ENCODE measurements at regions of chr2 and their contacts with region 1.

Region 1: DNA sequence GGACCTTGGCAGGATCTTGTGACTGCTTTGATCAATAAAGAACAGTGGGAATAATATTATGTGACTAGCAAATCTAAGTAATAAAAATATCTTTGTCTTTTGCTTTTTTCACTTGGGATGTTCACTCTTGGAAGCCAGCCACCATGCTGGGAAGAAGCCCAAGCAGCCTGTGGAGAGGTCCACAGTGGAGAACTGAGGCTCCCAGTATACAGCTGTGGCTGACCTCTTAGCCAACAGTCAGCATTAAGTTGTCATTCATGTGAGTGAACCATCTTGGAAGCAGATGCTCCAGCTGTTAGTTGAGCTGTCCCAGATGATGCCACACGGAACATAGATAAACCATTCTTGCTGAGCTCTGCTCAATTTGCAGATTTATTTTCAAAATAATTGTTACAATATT is 160.0 kb downstream of the OSR1 start:
- DNase-seq: no peak
- H3K4me3 ChIP-seq: no peak overlapping the region
- H3K27ac ChIP-seq: no peak overlapping the region
- H3K4me1 ChIP-seq: no peaks in the 10 kb centered on the region
- CTCF ChIP-seq: no peak

Region 2: GRCh38 chr2:18849841-18850578 is 348.4 kb before region 1 on chr2:
- CTCF ChIA-PET with region 1: no interaction called
- POLR2A ChIA-PET with region 1: no interaction called
- intact Hi-C with region 1: no loop called
- DNase-seq: no peak
- H3K4me3 ChIP-seq: no peak overlapping the region
- H3K27ac ChIP-seq: no peak overlapping the region
- H3K4me1 ChIP-seq: no peaks in the 10 kb centered on the region
- CTCF ChIP-seq: no peak

Region 3: GRCh38 chr2:18991177-18992168 is 206.9 kb before region 1 on chr2:
- CTCF ChIA-PET with region 1: no interaction called
- POLR2A ChIA-PET with region 1: no interaction called
- intact Hi-C with region 1: loop called (anchors 10 kb)
- DNase-seq: no peak
- H3K4me3 ChIP-seq: no peak overlapping the region
- H3K27ac ChIP-seq: no peak overlapping the region
- H3K4me1 ChIP-seq: no peaks in the 10 kb centered on the region
- CTCF ChIP-seq: no peak

Region 4: GRCh38 chr2:19312949-19313348 is 114.6 kb after region 1 on chr2:
- CTCF ChIA-PET with region 1: no interaction called
- POLR2A ChIA-PET with region 1: no interaction called
- intact Hi-C with region 1: no loop called
- DNase-seq: peak; percentile 15
- H3K4me3 ChIP-seq: no peak overlapping the region
- H3K27ac ChIP-seq: no peak overlapping the region
- H3K4me1 ChIP-seq: no peaks in the 10 kb centered on the region
- CTCF ChIP-seq: peak; percentile 40; the same call in 1 of the 2 replicates

Measured in OCI-LY7 (cell line).